Activated CD4-positive, alpha-beta T cell treated with anti-CD3 and anti-CD28 coated beads, Interleukin-2, amount 10 ng/mL, durations not matched to agents 7 days and 5 days (primary cell): ENCODE measurements at regions of chr20 and their contacts with region 1.

Region 1: DNA sequence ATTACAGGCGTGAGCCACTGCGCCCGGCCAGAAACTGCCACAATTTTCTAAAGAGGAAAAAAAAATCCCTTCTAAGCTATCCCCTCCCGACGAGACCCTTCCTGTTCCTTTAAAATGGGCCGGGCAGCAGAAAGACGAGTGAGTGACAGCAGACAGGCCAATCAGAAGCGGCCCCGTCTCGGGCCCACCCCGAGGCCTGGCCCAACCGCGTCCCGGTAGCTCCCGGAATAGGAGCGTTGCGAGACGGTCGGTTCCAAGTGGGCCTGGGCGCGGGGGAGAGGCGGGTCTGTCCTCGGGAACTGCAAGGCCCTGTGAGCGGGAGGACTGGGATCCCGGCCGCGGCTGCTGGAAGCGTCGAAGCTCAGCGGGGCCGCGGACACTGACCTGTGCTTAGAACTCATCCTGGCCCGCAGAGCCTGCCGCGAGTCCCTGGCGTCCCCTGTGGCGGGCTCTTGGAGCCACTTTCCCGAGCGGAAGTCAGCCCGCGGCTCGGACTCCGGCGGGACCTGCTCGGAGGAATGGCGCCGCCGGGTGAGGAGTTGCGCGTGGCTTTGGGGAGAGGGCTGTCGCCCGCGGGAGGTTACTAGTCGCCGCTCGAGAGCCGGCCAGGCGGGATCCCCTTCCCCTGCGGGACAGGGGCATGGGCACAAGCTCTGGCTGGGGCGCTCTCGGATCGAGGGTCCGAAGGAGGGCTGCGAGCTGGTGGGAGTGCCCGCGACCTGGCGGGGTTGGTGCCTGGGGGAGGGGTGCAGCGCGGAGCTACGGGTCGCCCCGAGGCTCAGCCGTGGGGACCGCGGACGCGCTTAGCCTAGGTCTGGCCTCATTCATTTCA is at the starts of genes MROH8 and RPN2:
- DNase-seq: peak; percentile 97
- H3K4me3 Mint-ChIP-seq: peak within 1 kb of the TSS; percentile 99
- H3K27ac Mint-ChIP-seq: peak within 1 kb of the TSS; percentile 100
- H3K4me1 Mint-ChIP-seq: peaks cover 37% of the 10 kb centered on the region
- H3K27me3 Mint-ChIP-seq: peaks cover 2% of the 10 kb centered on the region
- total RNA-seq, gene MROH8: 2.5 to 3.0 TPM
- total RNA-seq, gene RPN2: 154 to 176 TPM

Region 2: GRCh38 chr20:37053230-37053950 is 125.7 kb before region 1 on chr20:
- CTCF ChIA-PET with region 1: no interaction called
- POLR2A ChIA-PET with region 1: no interaction called
- DNase-seq: no peak
- H3K4me3 Mint-ChIP-seq: no peak overlapping the region
- H3K27ac Mint-ChIP-seq: no peak overlapping the region
- H3K4me1 Mint-ChIP-seq: peaks cover 15% of the 10 kb centered on the region
- H3K27me3 Mint-ChIP-seq: no peaks in the 10 kb centered on the region

Region 3: GRCh38 chr20:37081717-37082289 is 97.3 kb before region 1 on chr20:
- CTCF ChIA-PET with region 1: no interaction called
- POLR2A ChIA-PET with region 1: no interaction called
- DNase-seq: peak; percentile 62
- H3K4me3 Mint-ChIP-seq: no peak overlapping the region
- H3K27ac Mint-ChIP-seq: peak overlapping the region; percentile 72
- H3K4me1 Mint-ChIP-seq: peaks cover 38% of the 10 kb centered on the region
- H3K27me3 Mint-ChIP-seq: no peaks in the 10 kb centered on the region

Region 4: DNA sequence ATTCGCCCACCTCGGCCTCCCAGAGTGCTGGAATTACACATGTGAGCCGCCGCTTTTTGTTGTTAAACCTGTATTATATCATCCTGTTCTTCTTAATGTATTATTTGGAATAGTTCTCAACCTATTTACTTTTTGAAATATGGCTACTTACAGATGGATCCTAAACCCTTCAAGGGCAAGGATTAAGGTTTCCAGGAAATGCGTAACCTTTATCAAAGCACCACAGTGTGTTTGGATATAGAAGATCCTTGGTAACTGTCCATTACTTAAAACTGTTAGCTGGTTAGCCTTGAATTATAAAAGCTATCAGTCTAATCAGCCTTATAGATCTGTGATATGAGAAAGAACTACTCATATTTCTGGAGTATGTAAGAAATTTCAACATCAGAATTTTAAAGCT is 12.2 kb before region 1 on chr20:
- CTCF ChIA-PET with region 1: interaction called, 12 read pairs
- POLR2A ChIA-PET with region 1: no interaction called
- DNase-seq: no peak
- H3K4me3 Mint-ChIP-seq: no peak overlapping the region
- H3K27ac Mint-ChIP-seq: no peak overlapping the region
- H3K4me1 Mint-ChIP-seq: no peaks in the 10 kb centered on the region
- H3K27me3 Mint-ChIP-seq: peaks cover 6% of the 10 kb centered on the region

Region 5: DNA sequence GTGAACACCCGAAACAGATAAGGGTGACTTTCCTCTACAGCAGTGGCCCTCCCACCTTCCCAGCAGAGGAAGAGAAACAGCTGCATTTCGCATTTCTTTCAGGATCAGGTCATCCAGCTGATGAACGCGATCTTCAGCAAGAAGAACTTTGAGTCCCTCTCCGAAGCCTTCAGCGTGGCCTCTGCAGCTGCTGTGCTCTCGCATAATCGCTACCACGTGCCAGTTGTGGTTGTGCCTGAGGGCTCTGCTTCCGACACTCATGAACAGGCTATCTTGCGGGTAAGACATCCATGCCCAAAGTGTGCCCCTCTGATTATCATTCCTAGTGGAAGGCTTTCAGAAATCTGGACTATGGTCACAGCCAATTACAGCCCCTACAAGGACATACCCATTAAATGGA is 28.1 kb after region 1 on chr20:
- CTCF ChIA-PET with region 1: no interaction called
- POLR2A ChIA-PET with region 1: no interaction called
- DNase-seq: no peak
- H3K4me3 Mint-ChIP-seq: no peak overlapping the region
- H3K27ac Mint-ChIP-seq: no peak overlapping the region
- H3K4me1 Mint-ChIP-seq: no peaks in the 10 kb centered on the region
- H3K27me3 Mint-ChIP-seq: no peaks in the 10 kb centered on the region